WTC11 (cell line): ENCODE measurements at regions of chr17 and their contacts with region 1.

Region 1: GRCh38 chr17:8376271-8377067 is at the start of gene KRABD2:
- DNase-seq: peak; percentile 94
- ATAC-seq: peak; percentile 88
- H3K4me3 Mint-ChIP-seq: peak within 1 kb of the TSS; percentile 84
- H3K27ac Mint-ChIP-seq: peak within 1 kb of the TSS; percentile 96
- H3K4me1 Mint-ChIP-seq: peaks cover 41% of the 10 kb centered on the region
- H3K27me3 Mint-ChIP-seq: no peaks in the 10 kb centered on the region
- CTCF ChIP-seq: peak; percentile 46; the same call in 1 of the 2 replicates

Region 2: GRCh38 chr17:8255499-8255898 is 121.0 kb before region 1 on chr17:
- CTCF ChIA-PET with region 1: no interaction called
- POLR2A ChIA-PET with region 1: no interaction called
- DNase-seq: no peak
- ATAC-seq: peak; percentile 92
- H3K4me3 Mint-ChIP-seq: no peak overlapping the region
- H3K27ac Mint-ChIP-seq: no peak overlapping the region; the same call in 1 of the 2 replicates
- H3K4me1 Mint-ChIP-seq: peaks cover 2% of the 10 kb centered on the region
- H3K27me3 Mint-ChIP-seq: no peaks in the 10 kb centered on the region
- CTCF ChIP-seq: no peak

Region 3: GRCh38 chr17:8283356-8283755 is 93.1 kb before region 1 on chr17:
- CTCF ChIA-PET with region 1: no interaction called
- POLR2A ChIA-PET with region 1: no interaction called
- DNase-seq: no peak
- ATAC-seq: no peak; the same call in 1 of the 2 replicates
- H3K4me3 Mint-ChIP-seq: no peak overlapping the region
- H3K27ac Mint-ChIP-seq: no peak overlapping the region
- H3K4me1 Mint-ChIP-seq: peaks cover 10% of the 10 kb centered on the region
- H3K27me3 Mint-ChIP-seq: peaks cover 3% of the 10 kb centered on the region; the same call in 1 of the 2 replicates
- CTCF ChIP-seq: no peak

Region 4: DNA sequence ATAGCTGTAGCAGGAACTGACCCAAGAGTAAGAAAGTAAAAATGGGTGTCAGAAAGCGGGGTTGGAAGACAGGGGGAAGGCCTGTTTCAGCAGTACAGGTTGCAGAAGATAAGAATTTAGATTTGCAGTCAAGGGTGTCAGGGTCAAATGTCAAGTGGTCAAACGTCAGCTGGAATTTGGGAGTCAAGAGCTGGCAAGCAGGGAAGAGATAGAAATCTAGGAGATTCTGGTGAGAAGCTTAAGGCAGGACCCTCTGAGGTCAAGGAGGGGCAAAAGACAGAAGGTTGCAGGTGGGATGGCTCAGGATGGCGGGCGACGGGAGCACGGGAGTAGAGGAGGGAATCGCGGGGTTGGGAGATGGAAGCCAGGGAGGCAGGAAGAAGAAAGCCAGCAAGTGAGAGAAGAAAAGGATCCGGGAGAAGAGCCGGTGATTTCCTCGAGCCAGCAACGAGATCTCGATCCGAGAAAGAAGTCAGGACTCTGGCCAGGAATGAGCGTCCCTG is 81.6 kb before region 1 on chr17:
- CTCF ChIA-PET with region 1: interaction called, 13 read pairs
- POLR2A ChIA-PET with region 1: interaction called, 9 read pairs
- DNase-seq: no peak
- ATAC-seq: peak; percentile 8
- H3K4me3 Mint-ChIP-seq: peak overlapping the region; percentile 74
- H3K27ac Mint-ChIP-seq: peak overlapping the region; percentile 73
- H3K4me1 Mint-ChIP-seq: peaks cover 20% of the 10 kb centered on the region
- H3K27me3 Mint-ChIP-seq: no peaks in the 10 kb centered on the region; the same call in 1 of the 2 replicates
- CTCF ChIP-seq: no peak

Region 5: DNA sequence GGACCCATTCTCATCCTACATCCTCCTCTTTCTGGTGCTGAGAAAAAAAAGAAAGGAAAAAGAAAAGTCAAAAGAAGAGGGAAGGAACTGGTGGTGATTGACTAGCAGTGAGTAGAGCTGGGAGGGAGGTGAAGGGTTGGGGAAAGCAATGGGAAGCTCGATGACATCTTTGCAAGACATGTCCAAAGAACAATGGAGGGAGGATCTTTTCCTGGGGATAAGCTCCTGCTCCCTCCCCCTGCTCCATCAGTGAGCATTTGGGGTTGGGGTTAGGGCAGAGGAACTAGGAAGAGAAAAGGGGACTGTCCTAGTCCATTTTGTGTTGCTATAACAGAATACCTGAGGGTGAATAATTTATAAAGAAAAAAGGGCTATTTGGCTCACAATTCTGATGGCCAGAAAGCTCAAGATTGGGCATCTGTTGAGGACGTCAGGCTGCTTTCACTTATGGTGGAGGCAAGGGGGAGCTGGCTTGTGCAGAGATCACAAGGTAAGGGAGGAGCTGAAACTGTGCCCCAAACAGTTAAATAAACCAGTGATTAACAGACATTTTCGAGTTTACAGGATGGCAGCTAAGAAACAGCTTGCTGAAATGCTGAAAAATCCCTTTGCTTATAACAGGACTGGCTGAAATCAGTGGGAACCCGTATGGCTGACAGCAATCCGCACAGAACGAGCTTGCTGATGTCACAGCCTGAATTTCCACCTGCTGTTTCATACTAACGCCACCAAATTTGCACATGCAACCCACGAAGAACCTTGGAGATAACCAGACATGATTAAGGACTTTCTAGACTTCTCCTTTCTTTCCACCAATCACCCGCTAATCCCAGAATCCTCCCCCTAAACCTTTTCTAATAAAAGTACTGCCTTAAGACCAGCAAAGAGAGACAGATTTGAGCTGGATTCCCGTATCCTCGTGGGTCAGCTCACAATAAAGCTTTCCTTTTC is 38.4 kb before region 1 on chr17:
- CTCF ChIA-PET with region 1: interaction called, 6 read pairs
- POLR2A ChIA-PET with region 1: interaction called, 11 read pairs
- DNase-seq: no peak
- ATAC-seq: no peak
- H3K4me3 Mint-ChIP-seq: no peak overlapping the region
- H3K27ac Mint-ChIP-seq: peak overlapping the region; percentile 60
- H3K4me1 Mint-ChIP-seq: peaks cover 19% of the 10 kb centered on the region
- H3K27me3 Mint-ChIP-seq: no peaks in the 10 kb centered on the region
- CTCF ChIP-seq: no peak